ENCODE measurements at regions of chr1 and their contacts with region 1.

Region 1: GRCh38 chr1:43247256-43247921 is 22.4 kb upstream of the TMEM125 start:
- DNase-seq: no peak
- H3K4me3 ChIP-seq: no peak overlapping the region
- H3K27ac ChIP-seq: no peak overlapping the region
- H3K4me1 ChIP-seq: no peaks in the 10 kb centered on the region
- H3K27me3 ChIP-seq: no peaks in the 10 kb centered on the region
- CTCF ChIP-seq: no peak

Region 2: DNA sequence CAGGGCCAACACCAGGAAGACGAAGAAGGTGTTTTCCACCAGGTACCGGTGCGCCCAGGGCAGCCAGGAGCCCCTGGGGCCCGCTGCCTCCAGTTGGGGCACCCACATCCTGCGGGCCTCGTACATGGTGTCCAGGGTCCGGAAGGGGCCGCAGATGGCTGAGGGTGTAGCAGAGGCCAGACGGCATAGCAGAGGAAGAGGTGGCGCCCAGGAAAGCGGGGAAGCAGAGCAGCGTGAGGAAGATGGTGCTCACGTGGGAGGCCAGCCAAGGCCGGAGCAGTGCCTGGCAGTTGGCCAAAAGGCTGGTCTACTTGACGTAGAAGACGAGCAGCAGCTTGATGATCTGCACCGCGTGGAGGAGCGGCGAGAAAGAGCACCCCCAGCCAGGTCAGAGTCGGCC is 360.6 kb before region 1 on chr1:
- CTCF ChIA-PET with region 1: no interaction called
- dilution Hi-C with region 1: no loop called
- in situ Hi-C with region 1: no loop called
- intact Hi-C with region 1: no loop called
- DNase-seq: no peak
- H3K4me3 ChIP-seq: no peak overlapping the region
- H3K27ac ChIP-seq: no peak overlapping the region
- H3K4me1 ChIP-seq: no peaks in the 10 kb centered on the region
- H3K27me3 ChIP-seq: peaks cover 9% of the 10 kb centered on the region
- CTCF ChIP-seq: no peak

Region 3: GRCh38 chr1:43152866-43153265 is 94.5 kb before region 1 on chr1:
- CTCF ChIA-PET with region 1: no interaction called
- dilution Hi-C with region 1: loop called (anchors 5 kb)
- in situ Hi-C with region 1: no loop called
- intact Hi-C with region 1: no loop called
- DNase-seq: peak; percentile 88
- H3K4me3 ChIP-seq: no peak overlapping the region
- H3K27ac ChIP-seq: peak overlapping the region; percentile 50
- H3K4me1 ChIP-seq: peaks cover 14% of the 10 kb centered on the region
- H3K27me3 ChIP-seq: no peaks in the 10 kb centered on the region
- CTCF ChIP-seq: peak in 1 of 2 donors; percentile 20

Region 4: GRCh38 chr1:43227143-43227764 is 20.1 kb before region 1 on chr1:
- CTCF ChIA-PET with region 1: no interaction called
- dilution Hi-C with region 1: no loop called
- in situ Hi-C with region 1: no loop called
- intact Hi-C with region 1: no loop called
- DNase-seq: peak; percentile 37
- H3K4me3 ChIP-seq: no peak overlapping the region
- H3K27ac ChIP-seq: no peak overlapping the region
- H3K4me1 ChIP-seq: no peaks in the 10 kb centered on the region
- H3K27me3 ChIP-seq: no peaks in the 10 kb centered on the region
- CTCF ChIP-seq: peak; percentile 93 to 96

Region 5: GRCh38 chr1:43466403-43466802 is 219.0 kb after region 1 on chr1:
- CTCF ChIA-PET with region 1: no interaction called
- dilution Hi-C with region 1: no loop called
- in situ Hi-C with region 1: no loop called
- intact Hi-C with region 1: no loop called
- DNase-seq: no peak
- H3K4me3 ChIP-seq: no peak overlapping the region
- H3K27ac ChIP-seq: no peak overlapping the region
- H3K4me1 ChIP-seq: no peaks in the 10 kb centered on the region
- H3K27me3 ChIP-seq: no peaks in the 10 kb centered on the region
- CTCF ChIP-seq: no peak

Measured in mammary epithelial cell (primary cell).